H1 (cell line): ENCODE measurements at regions of chr17 and their contacts with region 1.

Region 1: DNA sequence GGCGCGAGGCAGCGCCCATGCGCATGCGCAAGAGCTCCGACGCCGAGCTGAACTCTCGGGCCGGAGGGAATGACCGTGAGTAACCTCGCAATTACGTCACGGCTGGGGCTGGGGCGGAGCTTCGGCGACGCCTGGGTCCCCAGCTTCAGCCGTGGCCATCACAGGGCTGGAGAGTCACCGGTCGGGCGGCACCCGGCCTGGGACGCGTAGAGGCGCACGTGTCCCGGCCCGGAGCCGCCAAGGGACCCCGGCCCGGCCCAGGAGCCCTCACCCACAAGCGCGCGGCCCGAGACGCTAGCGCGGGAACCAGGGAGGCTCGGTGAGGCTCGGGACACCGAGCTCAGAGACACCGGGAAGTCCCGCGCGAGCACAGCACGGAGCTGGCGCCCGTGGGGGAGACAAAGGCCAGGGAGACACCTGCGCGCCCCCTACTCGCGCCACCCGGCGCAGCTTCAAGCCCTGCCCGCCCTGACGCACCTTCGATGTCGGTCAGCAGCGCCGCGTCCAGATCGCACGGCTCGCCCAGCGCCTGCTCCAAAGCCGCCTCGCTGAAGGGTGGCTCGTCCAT is 452 bp downstream of the SREBF1 start:
- DNase-seq: peak; percentile 89 to 99
- H3K4me3 ChIP-seq: peak overlapping the region; percentile 81 to 99 (median 96)
- H3K27ac ChIP-seq: peak overlapping the region; percentile 93
- H3K4me1 ChIP-seq: peaks cover 19 to 48% (median 39%) of the 10 kb centered on the region in 4 experiments
- H3K27me3 ChIP-seq: no peaks in the 10 kb centered on the region
- CTCF ChIP-seq: no peak
- EP300 ChIP-seq: peak in 1 of 2 experiments; percentile 5; a peak in 1 of 3 replicates
- POLR2A ChIP-seq: peak; percentile 81 to 99
- RAD21 ChIP-seq: peak in 1 of 2 experiments; percentile 2; a peak in 1 of 4 replicates

Region 2: GRCh38 chr17:17303010-17303846 is 533.1 kb before region 1 on chr17 and contains the start of gene NT5M:
- CTCF ChIA-PET with region 1: no interaction called
- POLR2A ChIA-PET with region 1: no interaction called
- DNase-seq: peak in 1 of 2 experiments; percentile 86
- H3K4me3 ChIP-seq: peak within 1 kb of the TSS; percentile 61 to 75 (median 69)
- H3K27ac ChIP-seq: peak within 1 kb of the TSS; percentile 40; the same call in 1 of the 2 replicates
- H3K4me1 ChIP-seq: peaks cover 0 to 6% (median under 1%) of the 10 kb centered on the region in 4 experiments; a peak in 4 of 7 replicates
- H3K27me3 ChIP-seq: peaks cover 0 to 10% (median 8%) of the 10 kb centered on the region in 4 experiments; a peak in 5 of 7 replicates
- CTCF ChIP-seq: no peak
- EP300 ChIP-seq: no peak
- POLR2A ChIP-seq: peak; percentile 58 to 67
- RAD21 ChIP-seq: no peak
- total RNA-seq, gene NT5M: 7.6 and 8.7 TPM in 2 replicates

Region 3: GRCh38 chr17:17653343-17653742 is 183.0 kb before region 1 on chr17:
- CTCF ChIA-PET with region 1: no interaction called
- POLR2A ChIA-PET with region 1: no interaction called
- DNase-seq: no peak
- H3K4me3 ChIP-seq: no peak overlapping the region
- H3K27ac ChIP-seq: no peak overlapping the region
- H3K4me1 ChIP-seq: no peaks in the 10 kb centered on the region
- H3K27me3 ChIP-seq: no peaks in the 10 kb centered on the region; a peak in 1 of 7 replicates
- CTCF ChIP-seq: no peak
- EP300 ChIP-seq: no peak
- POLR2A ChIP-seq: no peak
- RAD21 ChIP-seq: no peak

Region 4: DNA sequence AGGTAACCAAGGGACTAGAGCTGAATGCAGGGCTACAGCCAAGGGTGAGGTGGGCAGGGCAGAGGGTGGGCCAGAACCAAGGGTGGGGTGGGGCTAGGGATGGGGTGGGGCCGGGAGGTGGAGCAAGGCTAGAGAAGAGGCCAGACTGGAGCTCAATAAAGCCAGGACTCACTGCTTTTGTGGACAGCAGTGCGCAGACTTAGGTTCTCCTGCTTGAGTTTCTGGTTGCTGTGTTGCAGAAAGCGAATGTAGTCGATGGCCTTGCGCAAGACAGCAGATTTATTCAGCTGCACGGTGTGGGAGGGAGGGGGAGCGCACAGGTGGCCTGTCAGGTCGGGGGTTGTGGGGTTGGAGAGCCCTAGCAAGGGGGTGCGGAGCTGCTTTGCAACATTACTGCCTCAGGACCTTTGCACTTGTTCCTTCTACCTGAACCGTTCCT is 18.2 kb before region 1 on chr17:
- CTCF ChIA-PET with region 1: interaction called, 66 read pairs
- POLR2A ChIA-PET with region 1: interaction called, 532 read pairs
- DNase-seq: no peak
- H3K4me3 ChIP-seq: no peak overlapping the region
- H3K27ac ChIP-seq: no peak overlapping the region
- H3K4me1 ChIP-seq: peaks cover 0 to 19% (median 11%) of the 10 kb centered on the region in 4 experiments; a peak in 6 of 7 replicates
- H3K27me3 ChIP-seq: no peaks in the 10 kb centered on the region; a peak in 1 of 7 replicates
- CTCF ChIP-seq: no peak
- EP300 ChIP-seq: no peak
- POLR2A ChIP-seq: no peak; a peak in 1 of 3 replicates
- RAD21 ChIP-seq: no peak

Region 5: GRCh38 chr17:17849845-17850373 is 13.6 kb after region 1 on chr17:
- CTCF ChIA-PET with region 1: interaction called, 7 read pairs
- POLR2A ChIA-PET with region 1: interaction called, 122 read pairs
- DNase-seq: no peak
- H3K4me3 ChIP-seq: no peak overlapping the region
- H3K27ac ChIP-seq: no peak overlapping the region
- H3K4me1 ChIP-seq: peaks cover 0 to 30% (median 19%) of the 10 kb centered on the region in 4 experiments; a peak in 6 of 7 replicates
- H3K27me3 ChIP-seq: no peaks in the 10 kb centered on the region; a peak in 1 of 7 replicates
- CTCF ChIP-seq: no peak
- EP300 ChIP-seq: no peak
- POLR2A ChIP-seq: no peak
- RAD21 ChIP-seq: no peak

Region 6: GRCh38 chr17:17868641-17869522 is 32.5 kb after region 1 on chr17:
- CTCF ChIA-PET with region 1: interaction called, 4 read pairs
- POLR2A ChIA-PET with region 1: interaction called, 21 read pairs
- DNase-seq: no peak
- H3K4me3 ChIP-seq: 0 out of 8 replicates have a peak overlapping the region, but pooled peaks of 1 of the 4 experiments have one; percentile 4
- H3K27ac ChIP-seq: no peak overlapping the region
- H3K4me1 ChIP-seq: peaks cover 3 to 14% (median 11%) of the 10 kb centered on the region in 4 experiments
- H3K27me3 ChIP-seq: peaks cover 0 to 6% (median 3%) of the 10 kb centered on the region in 4 experiments; a peak in 4 of 7 replicates
- CTCF ChIP-seq: no peak
- EP300 ChIP-seq: no peak
- POLR2A ChIP-seq: no peak
- RAD21 ChIP-seq: no peak